ENCODE measurements at regions of chr22 and their contacts with region 1.

Region 1: GRCh38 chr22:30005213-30005857 is 74.9 kb upstream of the HORMAD2 start:
- DNase-seq: peak; percentile 29 to 73 (median 54)
- ATAC-seq: peak; percentile 72
- H3K4me3 ChIP-seq: no peak overlapping the region
- H3K4me3 Mint-ChIP-seq: no peak overlapping the region
- H3K27ac ChIP-seq: no peak overlapping the region
- H3K27ac Mint-ChIP-seq: peak overlapping the region; percentile 6
- H3K4me1 ChIP-seq: no peaks in the 10 kb centered on the region
- H3K4me1 Mint-ChIP-seq: peaks cover 8% of the 10 kb centered on the region
- H3K27me3 ChIP-seq: no peaks in the 10 kb centered on the region
- H3K27me3 Mint-ChIP-seq: no peaks in the 10 kb centered on the region
- CTCF ChIP-seq: peak; percentile 99

Region 2: DNA sequence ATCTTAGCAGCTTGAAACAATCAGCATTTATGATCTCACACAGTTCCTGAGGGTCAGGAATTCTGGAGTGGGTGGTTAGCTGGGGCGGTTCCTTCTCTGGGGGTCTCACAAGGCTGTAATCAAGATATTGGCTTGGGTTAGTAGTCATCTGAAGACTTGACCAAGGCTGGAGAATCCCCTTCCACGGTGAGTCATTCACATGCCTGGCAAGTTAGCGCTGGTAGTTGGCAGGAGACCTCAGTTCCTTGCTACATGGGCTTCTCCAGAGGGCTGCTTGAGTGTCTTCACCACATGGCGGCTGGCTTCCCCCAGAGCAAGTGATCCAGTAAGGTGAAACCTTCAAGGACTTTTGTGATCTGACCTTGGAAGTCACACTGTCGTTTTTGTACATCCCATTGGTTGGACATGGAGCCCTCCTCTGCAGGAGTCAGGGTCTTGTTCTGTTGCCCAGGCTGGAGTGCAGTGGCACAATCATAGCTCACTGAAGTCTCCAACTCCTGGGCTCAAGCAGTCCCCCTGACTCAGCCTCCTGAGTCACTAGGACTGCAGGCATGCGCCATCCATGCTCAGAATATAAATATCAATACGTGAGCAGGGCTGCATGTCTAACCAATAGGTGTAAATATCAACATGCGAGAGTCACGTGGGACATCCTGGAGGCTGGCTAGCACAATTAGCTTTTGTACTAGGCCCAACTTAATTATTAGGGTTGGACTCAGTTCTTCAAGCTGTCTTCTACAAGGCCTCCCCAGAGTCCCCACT is 417.2 kb before region 1 on chr22:
- CTCF ChIA-PET with region 1: no interaction called
- POLR2A ChIA-PET with region 1: interaction called, 7 read pairs
- intact Hi-C with region 1: loop called (anchors 1 to 2 kb)
- DNase-seq: peak in 1 of 14 experiments; percentile 31
- ATAC-seq: no peak
- H3K4me3 ChIP-seq: no peak overlapping the region
- H3K4me3 Mint-ChIP-seq: no peak overlapping the region
- H3K27ac ChIP-seq: no peak overlapping the region
- H3K27ac Mint-ChIP-seq: no peak overlapping the region
- H3K4me1 ChIP-seq: peaks cover 12% of the 10 kb centered on the region
- H3K4me1 Mint-ChIP-seq: peaks cover 11% of the 10 kb centered on the region
- H3K27me3 ChIP-seq: no peaks in the 10 kb centered on the region
- H3K27me3 Mint-ChIP-seq: no peaks in the 10 kb centered on the region
- CTCF ChIP-seq: no peak

Region 3: GRCh38 chr22:29635734-29636357 is 369.5 kb before region 1 on chr22:
- CTCF ChIA-PET with region 1: no interaction called
- POLR2A ChIA-PET with region 1: no interaction called
- intact Hi-C with region 1: loop called (anchors 2 kb)
- DNase-seq: peak in 4 of 14 experiments; percentile 5 to 50 (median 39)
- ATAC-seq: no peak
- H3K4me3 ChIP-seq: no peak overlapping the region
- H3K4me3 Mint-ChIP-seq: no peak overlapping the region
- H3K27ac ChIP-seq: no peak overlapping the region
- H3K27ac Mint-ChIP-seq: no peak overlapping the region
- H3K4me1 ChIP-seq: no peaks in the 10 kb centered on the region
- H3K4me1 Mint-ChIP-seq: peaks cover 47% of the 10 kb centered on the region
- H3K27me3 ChIP-seq: no peaks in the 10 kb centered on the region
- H3K27me3 Mint-ChIP-seq: no peaks in the 10 kb centered on the region
- CTCF ChIP-seq: peak; percentile 52

Region 4: DNA sequence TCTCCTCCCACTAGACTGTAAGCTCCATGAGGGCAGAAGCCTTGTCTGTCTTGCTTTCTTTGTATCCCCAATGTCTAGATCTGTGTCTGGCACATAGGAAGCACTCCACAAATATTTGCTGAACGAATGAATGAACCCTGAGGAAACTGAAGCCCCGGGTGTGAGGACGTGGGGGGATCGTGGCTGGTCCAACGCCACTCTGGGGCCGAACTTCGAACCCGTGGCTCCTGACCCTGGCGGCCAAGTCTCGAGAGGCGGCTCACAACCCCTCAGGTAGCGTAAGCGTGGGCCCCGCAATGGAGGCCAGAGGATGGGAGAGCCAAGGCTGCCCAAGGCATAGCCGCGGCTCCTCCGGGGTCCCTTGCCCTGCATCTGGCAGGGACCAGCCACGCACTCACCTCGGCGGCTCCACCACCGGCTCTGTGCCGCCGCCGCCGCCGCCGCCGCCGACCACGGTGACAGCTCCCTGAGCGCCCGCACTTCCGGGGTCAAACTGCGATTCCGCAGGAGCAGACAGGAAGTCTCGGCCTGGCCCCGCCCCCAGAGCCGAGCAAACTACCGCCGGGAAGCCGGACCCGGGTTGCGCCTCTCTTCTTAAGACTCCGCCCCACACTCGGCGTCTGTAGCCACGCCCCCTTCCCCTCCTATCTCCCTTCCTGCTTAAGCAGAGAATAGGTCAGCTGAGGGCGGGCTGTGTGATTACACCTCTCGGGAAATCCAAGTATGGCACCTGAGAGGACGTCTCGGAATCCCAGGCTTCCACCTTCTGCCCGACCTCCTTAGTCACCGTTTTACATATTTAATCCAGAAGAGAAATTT is 167.3 kb before region 1 on chr22 and contains the start of gene ASCC2:
- CTCF ChIA-PET with region 1: interaction called, 3 read pairs
- POLR2A ChIA-PET with region 1: interaction called, 3 read pairs
- intact Hi-C with region 1: loop called (anchors 1 to 10 kb)
- DNase-seq: peak; percentile 97 to 100 (median 99)
- ATAC-seq: peak; percentile 97
- H3K4me3 ChIP-seq: peak within 1 kb of the TSS; percentile 72
- H3K4me3 Mint-ChIP-seq: peak within 1 kb of the TSS; percentile 94
- H3K27ac ChIP-seq: peak within 1 kb of the TSS; percentile 75 to 88
- H3K27ac Mint-ChIP-seq: peak within 1 kb of the TSS; percentile 94
- H3K4me1 ChIP-seq: peaks cover 27% of the 10 kb centered on the region
- H3K4me1 Mint-ChIP-seq: peaks cover 50% of the 10 kb centered on the region
- H3K27me3 ChIP-seq: no peaks in the 10 kb centered on the region
- H3K27me3 Mint-ChIP-seq: no peaks in the 10 kb centered on the region
- CTCF ChIP-seq: no peak
- total RNA-seq, gene ASCC2: 67.1 to 68.3 TPM